CD8-positive, alpha-beta memory T cell (primary cell): ENCODE measurements at regions of chr6 and their contacts with region 1.

Region 1: DNA sequence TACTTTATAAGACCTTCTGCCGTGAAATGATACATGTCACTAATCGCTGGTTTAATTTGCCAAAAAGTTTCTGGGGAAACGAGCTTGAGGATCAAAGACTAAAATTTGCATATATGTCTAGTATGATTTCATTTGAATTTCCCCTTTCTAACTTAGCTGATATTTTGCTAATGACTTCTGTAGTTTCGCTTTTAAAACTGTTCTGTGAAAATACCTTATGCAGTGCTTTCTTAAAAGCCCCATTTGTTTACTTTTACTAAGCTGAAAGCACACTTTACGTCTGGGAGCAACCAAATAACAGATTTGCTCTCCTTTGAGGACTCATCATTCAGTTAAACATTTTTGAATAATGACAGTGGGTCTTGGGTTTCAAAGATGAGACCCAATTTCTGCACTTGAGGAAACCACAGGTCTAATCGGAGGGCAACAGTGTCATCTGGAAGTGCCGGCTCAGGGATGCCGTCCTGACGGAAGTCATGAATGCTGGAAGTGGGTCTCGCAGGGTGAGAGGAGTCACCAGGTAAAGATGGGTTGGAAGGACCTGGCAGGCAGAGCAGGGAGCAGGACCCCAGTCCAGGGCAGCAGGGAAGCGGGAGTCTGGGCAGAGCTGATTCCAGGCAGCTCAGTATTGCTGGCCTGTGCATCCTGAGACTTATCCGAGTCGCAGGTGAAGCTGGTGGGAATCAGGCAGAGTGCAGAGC is 33.2 kb downstream of the PLEKHG1 start:
- DNase-seq: no peak
- H3K4me3 ChIP-seq: peak overlapping the region; percentile 15
- H3K4me3 Mint-ChIP-seq: peak overlapping the region; percentile 80 to 94 (median 88)
- H3K27ac ChIP-seq: peak overlapping the region; percentile 20
- H3K27ac Mint-ChIP-seq: peak overlapping the region; percentile 80 to 98 (median 88)
- H3K4me1 ChIP-seq: peaks cover 5% of the 10 kb centered on the region
- H3K4me1 Mint-ChIP-seq: peaks cover 59 to 69% (median 60%) of the 10 kb centered on the region in 3 donors
- H3K27me3 ChIP-seq: no peaks in the 10 kb centered on the region
- H3K27me3 Mint-ChIP-seq: peaks cover 0 to 7% of the 10 kb centered on the region in 2 donors

Region 2: GRCh38 chr6:150600301-150601017 is 32.5 kb before region 1 on chr6:
- CTCF ChIA-PET with region 1: interaction called, 12 read pairs
- POLR2A ChIA-PET with region 1: interaction called, 13 read pairs
- DNase-seq: peak; percentile 30 to 84 (median 57)
- H3K4me3 ChIP-seq: peak overlapping the region; percentile 52
- H3K4me3 Mint-ChIP-seq: peak overlapping the region; percentile 91 to 97 (median 94)
- H3K27ac ChIP-seq: no peak overlapping the region
- H3K27ac Mint-ChIP-seq: peak overlapping the region; percentile 81 to 97 (median 92)
- H3K4me1 ChIP-seq: no peaks in the 10 kb centered on the region
- H3K4me1 Mint-ChIP-seq: peaks cover 17 to 24% (median 21%) of the 10 kb centered on the region in 3 donors
- H3K27me3 ChIP-seq: no peaks in the 10 kb centered on the region
- H3K27me3 Mint-ChIP-seq: peaks cover 4 to 7% of the 10 kb centered on the region in 2 donors

Region 3: GRCh38 chr6:150720774-150721233 is 87.9 kb after region 1 on chr6:
- CTCF ChIA-PET with region 1: no interaction called
- POLR2A ChIA-PET with region 1: no interaction called
- DNase-seq: no peak
- H3K4me3 ChIP-seq: no peak overlapping the region
- H3K4me3 Mint-ChIP-seq: no peak overlapping the region
- H3K27ac ChIP-seq: no peak overlapping the region
- H3K27ac Mint-ChIP-seq: peak overlapping the region in 2 of 8 donors; percentile 8 to 10
- H3K4me1 ChIP-seq: no peaks in the 10 kb centered on the region
- H3K4me1 Mint-ChIP-seq: peaks cover 4 to 22% (median 12%) of the 10 kb centered on the region in 3 donors
- H3K27me3 ChIP-seq: no peaks in the 10 kb centered on the region
- H3K27me3 Mint-ChIP-seq: no peaks in the 10 kb centered on the region